Endothelial cell of umbilical vein (primary cell): ENCODE measurements at regions of chr4 and their contacts with region 1.

Region 1: DNA sequence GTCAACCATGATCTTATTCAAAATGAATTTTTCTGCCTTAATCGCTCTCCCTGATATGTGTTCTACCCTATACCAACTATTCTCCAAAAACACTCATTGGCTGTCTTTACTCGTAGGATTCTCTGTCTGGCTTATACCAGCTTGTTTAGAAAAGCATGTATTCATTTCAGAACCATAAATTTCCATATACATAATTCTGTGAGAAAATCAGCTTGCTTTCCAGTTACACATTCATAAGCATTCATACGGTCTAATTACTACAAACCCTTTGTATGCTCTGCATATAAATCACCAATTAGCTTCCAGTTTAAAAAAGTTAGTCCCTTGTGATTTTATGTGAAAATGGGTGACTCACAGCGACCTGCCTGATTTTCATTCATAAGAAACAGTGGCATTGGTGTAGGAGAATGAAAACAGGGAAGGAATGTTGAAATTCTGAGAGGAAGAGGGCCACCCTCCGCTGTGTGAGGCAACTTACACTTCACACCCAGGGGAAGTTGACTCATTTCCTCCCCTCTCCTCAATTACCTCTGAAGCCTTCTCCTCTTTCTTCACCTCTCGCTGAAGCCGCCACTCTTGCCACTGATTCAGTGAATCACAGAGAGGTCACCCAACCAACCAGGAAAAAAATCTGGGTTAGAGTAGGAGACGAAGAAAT is 63.3 kb downstream of the MEPE start:
- DNase-seq: peak; percentile 92
- H3K4me3 ChIP-seq: peak overlapping the region in 1 of 3 experiments; percentile 35
- H3K27ac ChIP-seq: peak overlapping the region; percentile 52
- H3K4me1 ChIP-seq: peaks cover 20% of the 10 kb centered on the region
- H3K27me3 ChIP-seq: no peaks in the 10 kb centered on the region
- CTCF ChIP-seq: no peak
- POLR2A ChIP-seq: no peak

Region 2: DNA sequence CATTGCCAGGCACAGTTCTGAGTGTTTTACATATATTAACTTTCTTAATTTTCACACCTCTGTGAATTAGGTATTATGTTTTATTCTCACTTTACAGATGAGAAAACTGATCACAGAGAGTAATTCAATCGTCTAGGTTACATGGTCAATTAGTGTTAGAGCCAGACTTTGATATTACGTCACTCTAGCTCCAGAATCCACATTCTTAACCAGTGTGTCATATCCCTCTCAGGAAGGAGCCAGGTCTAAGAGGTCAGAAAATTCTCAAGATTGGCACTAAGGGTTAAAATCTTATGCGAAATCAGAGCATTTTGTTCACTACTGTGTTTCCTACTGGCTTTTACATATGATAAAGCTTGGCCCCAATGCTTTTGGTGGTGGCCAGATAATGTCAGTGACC is 238.6 kb before region 1 on chr4:
- CTCF ChIA-PET with region 1: no interaction called
- POLR2A ChIA-PET with region 1: no interaction called
- dilution Hi-C with region 1: no loop called
- intact Hi-C with region 1: loop called (anchors 5 kb)
- DNase-seq: peak; percentile 91
- H3K4me3 ChIP-seq: no peak overlapping the region
- H3K27ac ChIP-seq: peak overlapping the region; percentile 93
- H3K4me1 ChIP-seq: peaks cover 32% of the 10 kb centered on the region
- H3K27me3 ChIP-seq: no peaks in the 10 kb centered on the region
- CTCF ChIP-seq: no peak
- POLR2A ChIP-seq: no peak

Region 3: DNA sequence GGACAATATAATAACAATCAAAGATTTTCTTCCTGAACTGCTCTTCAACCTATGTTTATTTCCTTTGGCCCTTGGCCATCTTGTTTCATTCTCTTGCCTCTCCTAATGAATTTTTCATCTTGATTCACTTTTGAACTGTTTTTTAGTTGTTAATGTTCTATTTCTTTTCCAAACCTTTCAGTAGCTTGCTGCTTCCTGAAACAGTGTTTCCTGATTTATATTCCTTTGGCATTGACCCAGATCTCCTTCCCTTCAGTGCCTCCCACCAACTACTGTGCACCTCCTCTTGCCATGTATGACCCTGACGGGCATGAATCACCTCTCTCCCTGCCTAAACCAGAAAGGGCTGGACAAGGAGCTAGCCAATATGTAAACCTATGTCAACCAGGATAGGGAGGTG is 53.9 kb after region 1 on chr4:
- CTCF ChIA-PET with region 1: interaction called, 5 read pairs
- POLR2A ChIA-PET with region 1: no interaction called
- dilution Hi-C with region 1: no loop called
- intact Hi-C with region 1: loop called (anchors 1 kb)
- DNase-seq: peak; percentile 89
- H3K4me3 ChIP-seq: no peak overlapping the region
- H3K27ac ChIP-seq: no peak overlapping the region
- H3K4me1 ChIP-seq: peaks cover 15% of the 10 kb centered on the region
- H3K27me3 ChIP-seq: no peaks in the 10 kb centered on the region
- CTCF ChIP-seq: no peak
- POLR2A ChIP-seq: no peak